Activated CD8-positive, alpha-beta T cell treated with anti-CD3 and anti-CD28 coated beads for 36 hours (primary cell): ENCODE measurements at regions of chr17 and their contacts with region 1.

Region 1: DNA sequence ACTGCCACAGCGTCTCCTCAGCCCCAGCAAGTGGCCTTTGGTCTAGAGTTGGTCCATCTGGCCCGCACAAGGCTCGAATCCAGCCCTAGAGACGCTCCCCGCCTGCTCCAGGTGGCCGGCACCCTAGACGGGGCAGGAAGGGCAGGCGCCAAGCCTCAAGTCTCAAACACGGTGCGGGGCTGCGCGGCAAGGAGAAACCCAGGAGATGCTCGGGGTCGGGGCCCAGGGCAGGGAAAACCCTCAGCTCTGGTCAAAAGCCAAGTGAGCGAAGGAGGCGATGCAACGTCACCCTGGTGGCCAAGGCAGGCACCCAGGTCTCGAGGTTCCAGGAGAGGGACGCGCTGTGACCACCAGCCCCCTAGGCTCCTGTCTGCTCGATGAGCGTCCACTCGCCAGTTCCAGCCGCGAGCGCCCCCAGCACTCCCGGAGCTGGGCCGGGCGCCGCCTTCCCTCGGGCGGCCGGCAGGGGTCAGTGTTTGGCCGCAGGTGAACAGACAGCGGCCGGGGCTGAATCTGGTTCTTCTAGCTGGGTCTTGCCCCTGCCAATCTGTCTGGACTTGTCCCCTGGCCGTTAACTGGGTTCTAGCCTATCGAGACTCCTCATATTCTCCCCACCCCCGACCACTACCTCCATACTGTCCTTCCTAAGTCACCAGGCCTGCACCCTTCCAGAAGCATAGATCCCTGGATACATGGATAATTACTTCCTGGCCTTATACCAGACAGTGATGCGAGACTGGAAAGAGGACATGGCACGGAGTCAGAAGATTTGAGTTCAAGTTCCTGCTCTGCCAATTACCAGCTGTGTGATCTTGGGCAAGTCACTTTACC is 44.0 kb downstream of the PRAC1 start:
- DNase-seq: peak; percentile 79
- ATAC-seq: peak; percentile 97
- H3K4me3 Mint-ChIP-seq: no peak overlapping the region
- H3K27ac Mint-ChIP-seq: no peak overlapping the region
- H3K4me1 Mint-ChIP-seq: peaks cover 2% of the 10 kb centered on the region
- H3K27me3 Mint-ChIP-seq: peaks cover 17% of the 10 kb centered on the region
- CTCF ChIP-seq: peak; percentile 92

Region 2: DNA sequence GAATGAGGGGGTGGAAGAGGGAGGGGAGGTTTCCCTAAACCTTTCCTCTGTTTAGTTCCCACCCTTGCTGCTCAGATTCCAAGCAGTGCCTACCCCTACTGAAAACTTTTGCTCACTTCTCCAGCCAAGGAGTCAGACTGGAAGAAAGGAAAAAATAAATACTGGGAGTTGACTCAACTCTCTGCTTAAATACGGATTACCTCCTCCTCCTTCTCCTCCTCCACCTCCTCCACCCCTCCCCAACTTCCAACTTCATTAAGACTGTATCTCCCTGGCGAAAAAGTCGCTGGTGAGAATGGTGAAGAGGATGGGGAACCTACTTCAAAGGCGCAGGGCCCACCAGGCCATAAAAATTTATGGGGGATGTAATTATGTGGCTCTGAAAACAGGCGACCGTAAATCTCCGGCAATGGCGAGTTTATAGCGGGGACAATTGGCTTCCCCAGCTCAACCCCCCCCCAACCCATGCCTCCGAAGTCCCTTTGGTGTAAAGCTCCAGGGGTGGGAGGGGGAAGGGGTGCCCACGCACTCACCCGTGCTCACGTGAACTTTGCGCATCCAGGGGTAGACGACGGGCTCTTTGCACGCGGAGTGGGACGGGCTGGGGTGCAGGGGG is 100.9 kb before region 1 on chr17:
- CTCF ChIA-PET with region 1: no interaction called
- POLR2A ChIA-PET with region 1: no interaction called
- intact Hi-C with region 1: no loop called
- DNase-seq: peak; percentile 42
- ATAC-seq: peak; percentile 8
- H3K4me3 Mint-ChIP-seq: peak overlapping the region; percentile 76
- H3K27ac Mint-ChIP-seq: peak overlapping the region; percentile 57
- H3K4me1 Mint-ChIP-seq: peaks cover 36% of the 10 kb centered on the region
- H3K27me3 Mint-ChIP-seq: peaks cover 35% of the 10 kb centered on the region
- CTCF ChIP-seq: no peak

Region 3: DNA sequence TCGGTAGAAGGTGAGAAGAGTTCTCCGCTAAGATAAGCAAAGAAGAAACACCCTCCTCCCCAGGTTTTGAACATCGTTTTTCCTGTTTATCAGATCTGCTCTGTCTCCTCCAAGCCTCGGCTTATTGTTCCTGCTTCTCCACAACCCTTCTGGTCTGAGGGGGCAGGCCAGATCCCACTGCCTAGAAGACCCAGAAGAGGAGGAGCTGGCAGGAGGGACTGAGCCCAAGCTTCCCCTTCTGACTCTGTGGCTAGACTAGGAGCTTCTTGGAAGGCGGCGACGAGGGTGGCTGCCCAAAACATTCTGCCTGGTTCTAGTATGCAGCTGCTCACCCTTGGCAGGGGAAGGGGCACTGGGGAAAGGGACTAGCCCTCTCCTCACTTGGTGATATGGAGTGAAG is 79.6 kb before region 1 on chr17:
- CTCF ChIA-PET with region 1: no interaction called
- POLR2A ChIA-PET with region 1: no interaction called
- intact Hi-C with region 1: no loop called
- DNase-seq: no peak
- ATAC-seq: no peak
- H3K4me3 Mint-ChIP-seq: peak overlapping the region; percentile 59
- H3K27ac Mint-ChIP-seq: no peak overlapping the region
- H3K4me1 Mint-ChIP-seq: peaks cover 33% of the 10 kb centered on the region
- H3K27me3 Mint-ChIP-seq: peaks cover 87% of the 10 kb centered on the region
- CTCF ChIP-seq: no peak

Region 4: GRCh38 chr17:48663134-48663924 is 15.0 kb before region 1 on chr17:
- CTCF ChIA-PET with region 1: interaction called, 27 read pairs
- POLR2A ChIA-PET with region 1: no interaction called
- intact Hi-C with region 1: no loop called
- DNase-seq: no peak
- ATAC-seq: no peak
- H3K4me3 Mint-ChIP-seq: no peak overlapping the region
- H3K27ac Mint-ChIP-seq: no peak overlapping the region
- H3K4me1 Mint-ChIP-seq: no peaks in the 10 kb centered on the region
- H3K27me3 Mint-ChIP-seq: peaks cover 14% of the 10 kb centered on the region
- CTCF ChIP-seq: no peak

Region 5: DNA sequence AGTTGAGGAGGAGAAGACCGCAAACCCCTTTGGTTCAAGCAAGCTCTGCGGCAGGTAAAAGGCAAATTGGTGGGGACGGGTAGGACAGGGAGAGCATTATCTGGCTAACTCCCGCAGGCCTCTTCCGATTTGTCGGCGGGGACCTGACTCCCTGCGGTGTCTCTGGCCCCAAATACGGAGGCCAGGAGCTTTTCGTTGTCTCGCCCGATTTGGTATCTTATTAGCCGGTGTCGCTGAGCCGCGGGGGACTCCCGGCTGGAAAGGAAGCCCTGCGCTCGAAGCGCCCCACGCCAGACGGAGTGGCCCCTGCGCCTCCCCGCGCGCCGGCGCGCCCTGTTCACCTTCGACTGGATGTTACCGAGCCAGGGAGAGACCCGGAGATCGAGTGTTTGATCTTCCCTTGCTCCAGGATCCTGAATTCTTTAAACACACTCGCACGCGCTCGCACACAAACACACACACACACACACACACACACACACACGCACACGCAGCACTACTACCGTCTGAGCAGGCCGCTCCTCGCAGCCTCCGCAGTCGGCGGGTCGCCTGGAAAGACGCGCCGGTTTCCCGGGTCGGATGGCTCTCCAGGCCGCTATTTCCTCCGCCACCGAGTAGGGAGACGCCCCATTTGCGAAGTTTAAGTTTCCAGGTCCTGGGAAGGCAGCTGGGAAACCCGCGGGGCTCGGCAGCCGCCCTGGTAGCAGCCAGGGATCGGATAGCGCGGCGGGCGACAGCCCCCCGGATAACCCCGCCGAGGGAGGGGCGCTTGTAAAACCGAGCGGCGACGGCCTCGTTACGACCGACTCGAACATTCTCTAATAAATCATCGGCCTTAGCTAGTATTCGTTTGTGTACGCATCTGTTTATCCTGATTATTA is 40.6 kb after region 1 on chr17:
- CTCF ChIA-PET with region 1: interaction called, 44 read pairs
- POLR2A ChIA-PET with region 1: interaction called, 4 read pairs
- intact Hi-C with region 1: no loop called
- DNase-seq: no peak
- ATAC-seq: peak; percentile 27
- H3K4me3 Mint-ChIP-seq: peak overlapping the region; percentile 3
- H3K27ac Mint-ChIP-seq: no peak overlapping the region
- H3K4me1 Mint-ChIP-seq: peaks cover 22% of the 10 kb centered on the region
- H3K27me3 Mint-ChIP-seq: peaks cover 74% of the 10 kb centered on the region
- CTCF ChIP-seq: no peak

Region 6: DNA sequence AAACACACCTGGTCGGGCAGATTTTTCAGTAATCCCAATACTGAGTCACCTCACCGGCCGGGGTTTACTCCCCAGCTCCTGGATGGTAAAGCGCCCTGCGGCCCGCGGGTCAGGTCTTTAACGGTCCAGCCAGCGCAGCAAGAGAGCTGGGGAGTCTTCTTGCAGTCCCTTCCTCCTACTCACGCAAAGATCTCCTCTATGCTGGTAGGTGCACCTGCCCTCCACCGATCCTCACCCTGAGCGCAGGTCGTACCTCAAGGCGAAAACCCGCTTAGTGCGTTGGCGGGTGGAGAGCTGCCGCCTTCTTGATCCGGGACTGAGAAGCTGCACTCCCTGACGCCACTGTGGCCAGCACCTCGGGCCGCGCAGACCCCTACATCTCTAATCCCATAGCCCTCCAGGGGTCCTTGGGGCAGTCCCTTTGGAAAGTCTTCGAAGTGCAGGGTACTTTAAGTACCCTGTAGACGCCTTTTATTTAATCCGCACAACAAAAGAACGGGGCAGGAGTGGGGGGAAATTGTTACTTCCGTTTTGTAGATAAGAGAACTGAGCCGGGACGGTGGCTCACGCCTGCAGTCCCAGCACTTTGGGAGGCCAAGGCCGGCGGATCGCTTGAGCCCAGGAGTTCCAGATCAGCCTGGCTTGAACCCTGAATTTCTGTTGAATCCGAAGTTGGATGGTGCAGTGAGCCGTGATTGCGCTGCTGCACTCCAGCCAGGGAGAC is 60.6 kb after region 1 on chr17:
- CTCF ChIA-PET with region 1: interaction called, 12 read pairs
- POLR2A ChIA-PET with region 1: no interaction called
- intact Hi-C with region 1: no loop called
- DNase-seq: no peak
- ATAC-seq: no peak
- H3K4me3 Mint-ChIP-seq: no peak overlapping the region
- H3K27ac Mint-ChIP-seq: no peak overlapping the region
- H3K4me1 Mint-ChIP-seq: peaks cover 9% of the 10 kb centered on the region
- H3K27me3 Mint-ChIP-seq: peaks cover 87% of the 10 kb centered on the region
- CTCF ChIP-seq: no peak

Region 7: GRCh38 chr17:48799069-48799723 is 120.8 kb after region 1 on chr17:
- CTCF ChIA-PET with region 1: interaction called, 38 read pairs
- POLR2A ChIA-PET with region 1: no interaction called
- intact Hi-C with region 1: loop called (anchors 5 kb)
- DNase-seq: no peak
- ATAC-seq: no peak
- H3K4me3 Mint-ChIP-seq: no peak overlapping the region
- H3K27ac Mint-ChIP-seq: no peak overlapping the region
- H3K4me1 Mint-ChIP-seq: no peaks in the 10 kb centered on the region
- H3K27me3 Mint-ChIP-seq: peaks cover 17% of the 10 kb centered on the region
- CTCF ChIP-seq: no peak

Region 8: DNA sequence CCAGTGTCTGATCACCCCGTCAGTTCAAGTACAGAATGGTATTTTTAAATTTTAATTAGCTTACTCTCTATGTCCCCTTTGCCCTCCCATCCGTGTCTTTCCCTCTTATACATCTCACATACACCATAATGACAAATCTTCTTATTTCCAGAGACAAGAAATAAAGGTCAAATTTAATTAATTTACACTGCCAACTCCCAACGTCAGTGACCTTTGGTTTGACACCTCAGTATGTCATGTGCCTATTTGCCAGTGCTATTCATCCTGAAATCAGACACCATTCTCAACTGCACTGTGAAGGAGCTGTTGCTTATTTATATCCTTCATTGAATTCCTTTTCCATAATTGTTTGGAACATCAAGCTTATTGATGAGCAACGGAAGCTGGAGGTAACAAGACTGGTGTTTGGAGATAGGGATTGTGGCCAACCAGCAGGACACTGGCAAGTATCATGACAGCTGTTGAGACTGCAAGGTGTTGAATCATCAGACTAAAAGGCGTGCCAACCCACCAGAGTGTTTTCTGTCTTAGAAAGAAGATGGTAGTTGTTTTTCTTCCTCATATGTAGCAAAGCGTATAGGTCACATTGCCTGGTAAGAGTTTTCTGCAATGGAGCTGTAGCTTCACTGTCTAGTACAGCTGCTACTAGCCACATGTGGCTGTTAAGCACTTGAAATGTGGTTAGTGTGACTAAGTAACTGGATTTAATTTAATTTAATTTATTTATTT is 165.0 kb after region 1 on chr17:
- CTCF ChIA-PET with region 1: interaction called, 10 read pairs
- POLR2A ChIA-PET with region 1: no interaction called
- intact Hi-C with region 1: no loop called
- DNase-seq: no peak
- ATAC-seq: no peak
- H3K4me3 Mint-ChIP-seq: no peak overlapping the region
- H3K27ac Mint-ChIP-seq: no peak overlapping the region
- H3K4me1 Mint-ChIP-seq: peaks cover 41% of the 10 kb centered on the region
- H3K27me3 Mint-ChIP-seq: no peaks in the 10 kb centered on the region
- CTCF ChIP-seq: no peak